Left cardiac atrium (tissue), 4 donors: ENCODE measurements at regions of chr15 and their contacts with region 1.

Region 1: GRCh38 chr15:86139828-86140227 is 60.2 kb downstream of the AGBL1 start:
- DNase-seq: no peak
- ATAC-seq: no peak

Region 2: GRCh38 chr15:85910834-85911233 is 229.0 kb before region 1 on chr15:
- intact Hi-C with region 1: loop called in 1 of 2 experiments (anchors 10 kb)
- DNase-seq: no peak
- ATAC-seq: peak in 1 of 2 donors; percentile 57